Heart left ventricle (tissue), 16 donors: ENCODE measurements at regions of chr20 and their contacts with region 1.

Region 1: GRCh38 chr20:44714696-44715482 is at the start of gene CCN5:
- DNase-seq: peak; percentile 89 to 95 (median 92)
- ATAC-seq: peak; percentile 67 to 84 (median 78)
- H3K4me3 ChIP-seq: peak within 1 kb of the TSS in 7 of 12 donors; percentile 4 to 46 (median 27)
- H3K27ac ChIP-seq: peak within 1 kb of the TSS; percentile 71 to 98 (median 88)
- H3K4me1 ChIP-seq: peaks cover 0 to 61% (median 36%) of the 10 kb centered on the region in 12 donors
- H3K27me3 ChIP-seq: no peaks in the 10 kb centered on the region
- CTCF ChIP-seq: no peak
- POLR2A ChIP-seq: no peak
- total RNA-seq, gene CCN5: 7.3 to 62.3 (median 28.7) TPM

Region 2: DNA sequence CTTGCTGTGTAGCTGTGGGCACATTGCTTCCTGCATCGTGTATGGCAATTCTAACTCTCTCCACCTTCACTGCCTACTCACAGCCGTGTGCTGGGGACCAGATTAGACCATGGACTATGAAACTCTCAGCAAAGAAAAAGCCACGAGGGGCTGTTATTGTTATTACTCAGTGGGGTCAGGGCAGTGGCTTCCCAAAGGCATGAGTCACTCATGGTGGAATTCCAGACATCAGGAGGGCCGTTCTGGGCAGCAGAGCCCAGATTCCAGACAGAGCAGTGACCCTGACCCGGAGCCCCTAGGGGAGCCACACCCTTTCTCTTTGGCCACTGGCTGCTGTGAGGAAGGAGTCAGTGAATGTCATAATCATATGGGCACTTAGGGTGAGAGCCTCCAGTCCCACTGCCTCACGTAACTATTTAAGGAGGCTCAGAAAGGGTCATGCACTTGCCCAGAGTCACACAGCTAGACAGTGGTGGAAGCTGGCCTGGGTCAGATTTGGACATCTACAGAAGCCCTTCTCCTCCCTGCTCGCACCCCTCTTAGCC is 21.9 kb before region 1 on chr20:
- intact Hi-C with region 1: loop called in 3 of 10 experiments (anchors 1 to 2 kb)
- DNase-seq: peak; percentile 64 to 86 (median 76)
- ATAC-seq: peak; percentile 32 to 83 (median 82)
- H3K4me3 ChIP-seq: no peak overlapping the region
- H3K27ac ChIP-seq: peak overlapping the region; percentile 42 to 95 (median 82)
- H3K4me1 ChIP-seq: peaks cover 0 to 56% (median 34%) of the 10 kb centered on the region in 12 donors
- H3K27me3 ChIP-seq: no peaks in the 10 kb centered on the region
- CTCF ChIP-seq: no peak
- POLR2A ChIP-seq: peak in 1 of 2 donors; percentile 18

Region 3: GRCh38 chr20:44701118-44701857 is 13.6 kb before region 1 on chr20:
- intact Hi-C with region 1: loop called in 1 of 10 experiments (anchors 1 kb)
- DNase-seq: peak in 2 of 5 donors; percentile 37 to 52
- ATAC-seq: no peak
- H3K4me3 ChIP-seq: no peak overlapping the region
- H3K27ac ChIP-seq: no peak overlapping the region
- H3K4me1 ChIP-seq: peaks cover 11 to 47% (median 32%) of the 10 kb centered on the region in 12 donors
- H3K27me3 ChIP-seq: no peaks in the 10 kb centered on the region
- CTCF ChIP-seq: no peak
- POLR2A ChIP-seq: no peak

Region 4: DNA sequence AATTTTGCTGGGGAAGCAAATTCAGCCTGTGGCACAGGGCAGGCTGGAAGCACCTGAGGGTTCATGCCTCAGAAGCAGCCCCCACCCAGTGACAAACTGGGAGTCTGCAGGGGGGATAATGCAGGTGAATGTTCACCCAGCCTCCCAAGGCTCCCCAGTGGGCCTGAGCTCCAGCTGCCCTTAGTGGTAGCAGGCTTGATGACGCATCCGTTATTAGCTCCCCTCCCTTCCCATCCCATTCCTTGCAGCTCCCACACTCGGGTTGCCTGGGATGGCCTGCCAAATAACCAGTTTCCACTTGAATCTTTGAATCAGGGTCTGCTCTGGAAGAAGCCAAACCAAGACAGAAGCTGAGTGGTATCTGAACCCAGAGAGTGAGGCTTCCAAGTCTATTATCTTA is 46.5 kb after region 1 on chr20:
- intact Hi-C with region 1: no loop called
- DNase-seq: no peak
- ATAC-seq: peak in 1 of 4 donors; percentile 81
- H3K4me3 ChIP-seq: no peak overlapping the region
- H3K27ac ChIP-seq: peak overlapping the region in 10 of 12 donors; percentile 51 to 94 (median 86)
- H3K4me1 ChIP-seq: peaks cover 0 to 22% (median 8%) of the 10 kb centered on the region in 12 donors
- H3K27me3 ChIP-seq: peaks cover 0 to 6% (median 0%) of the 10 kb centered on the region in 9 donors
- CTCF ChIP-seq: no peak
- POLR2A ChIP-seq: no peak

Region 5: GRCh38 chr20:45427236-45428149 is 712.6 kb after region 1 on chr20:
- intact Hi-C with region 1: no loop called
- DNase-seq: peak in 1 of 5 donors; percentile 52
- ATAC-seq: peak in 3 of 4 donors; percentile 48 to 73 (median 66)
- H3K4me3 ChIP-seq: no peak overlapping the region
- H3K27ac ChIP-seq: no peak overlapping the region
- H3K4me1 ChIP-seq: peaks cover 0 to 12% (median 0%) of the 10 kb centered on the region in 12 donors
- H3K27me3 ChIP-seq: no peaks in the 10 kb centered on the region
- CTCF ChIP-seq: peak in 1 of 12 donors; percentile 8
- POLR2A ChIP-seq: no peak

Region 6: DNA sequence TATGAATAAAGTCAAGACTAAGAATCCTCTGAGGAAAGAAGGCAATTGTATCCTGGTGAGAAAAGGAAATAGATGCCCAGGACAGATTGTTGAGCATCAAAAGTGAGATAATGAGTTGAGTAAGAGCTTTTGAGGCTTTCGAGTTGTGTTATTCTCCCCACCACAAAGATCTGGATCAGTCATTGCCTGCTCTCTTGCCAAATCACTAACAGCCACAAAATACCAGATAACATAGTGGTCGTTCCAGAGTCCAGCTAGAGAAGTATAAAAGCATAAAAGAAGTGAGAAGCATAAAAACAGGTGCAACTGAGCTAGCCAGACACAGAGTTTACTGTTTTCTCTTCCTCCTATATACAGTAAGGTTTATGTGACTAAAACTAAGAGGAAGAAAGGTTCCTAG is 1012.2 kb after region 1 on chr20:
- intact Hi-C with region 1: no loop called
- DNase-seq: no peak
- ATAC-seq: no peak
- H3K4me3 ChIP-seq: no peak overlapping the region
- H3K27ac ChIP-seq: no peak overlapping the region
- H3K4me1 ChIP-seq: no peaks in the 10 kb centered on the region
- H3K27me3 ChIP-seq: peaks cover 0 to 8% (median 0%) of the 10 kb centered on the region in 9 donors
- CTCF ChIP-seq: no peak
- POLR2A ChIP-seq: no peak